Right ventricle myocardium inferior (tissue), 1 donor: ENCODE measurements at regions of chr20 and their contacts with region 1.

Region 1: DNA sequence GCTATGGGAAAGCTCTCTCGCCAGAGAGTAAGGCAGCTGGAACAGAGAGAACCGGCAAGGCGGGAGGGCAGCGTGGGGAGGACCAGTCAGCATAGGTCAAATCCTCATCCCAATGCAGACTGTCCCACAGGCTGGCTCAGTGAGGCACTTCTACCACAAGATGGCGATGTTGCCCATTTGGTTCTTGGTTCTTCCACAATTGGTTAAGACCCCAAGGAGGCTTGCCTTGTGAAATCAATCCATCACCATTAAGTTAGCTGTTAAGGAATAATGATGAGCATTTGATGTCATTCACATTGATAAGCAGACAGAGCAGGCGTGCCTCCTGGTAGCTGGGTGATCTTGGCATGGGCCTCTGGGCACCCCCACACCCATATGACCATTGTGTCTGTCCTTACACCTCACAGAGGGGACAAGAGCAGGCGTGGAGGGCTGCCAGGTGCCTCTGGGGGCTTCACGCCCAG is 2.4 kb downstream of the CSTL1 start:
- DNase-seq: no peak
- ATAC-seq: peak; percentile 70

Region 2: DNA sequence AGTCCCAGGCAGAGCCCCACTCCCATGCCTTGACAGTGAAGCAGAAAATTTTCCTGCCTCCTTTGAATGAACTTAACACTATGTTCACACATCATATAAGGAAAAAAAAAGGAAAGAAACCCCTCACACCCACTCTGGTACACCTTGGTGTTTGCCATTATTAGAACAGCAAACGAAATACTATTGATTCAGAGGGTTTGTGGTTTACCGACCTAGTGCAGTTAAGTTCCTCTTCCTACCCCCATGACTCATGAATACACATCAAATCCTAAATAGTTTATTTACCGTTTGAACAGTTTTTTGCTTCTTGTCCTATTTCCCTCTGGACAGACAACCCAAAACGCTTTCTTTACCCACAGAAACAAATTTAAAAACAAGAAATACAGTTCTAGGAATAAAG is 1095.2 kb before region 1 on chr20:
- intact Hi-C with region 1: loop called (anchors 10 kb)
- DNase-seq: no peak
- ATAC-seq: no peak

Region 3: DNA sequence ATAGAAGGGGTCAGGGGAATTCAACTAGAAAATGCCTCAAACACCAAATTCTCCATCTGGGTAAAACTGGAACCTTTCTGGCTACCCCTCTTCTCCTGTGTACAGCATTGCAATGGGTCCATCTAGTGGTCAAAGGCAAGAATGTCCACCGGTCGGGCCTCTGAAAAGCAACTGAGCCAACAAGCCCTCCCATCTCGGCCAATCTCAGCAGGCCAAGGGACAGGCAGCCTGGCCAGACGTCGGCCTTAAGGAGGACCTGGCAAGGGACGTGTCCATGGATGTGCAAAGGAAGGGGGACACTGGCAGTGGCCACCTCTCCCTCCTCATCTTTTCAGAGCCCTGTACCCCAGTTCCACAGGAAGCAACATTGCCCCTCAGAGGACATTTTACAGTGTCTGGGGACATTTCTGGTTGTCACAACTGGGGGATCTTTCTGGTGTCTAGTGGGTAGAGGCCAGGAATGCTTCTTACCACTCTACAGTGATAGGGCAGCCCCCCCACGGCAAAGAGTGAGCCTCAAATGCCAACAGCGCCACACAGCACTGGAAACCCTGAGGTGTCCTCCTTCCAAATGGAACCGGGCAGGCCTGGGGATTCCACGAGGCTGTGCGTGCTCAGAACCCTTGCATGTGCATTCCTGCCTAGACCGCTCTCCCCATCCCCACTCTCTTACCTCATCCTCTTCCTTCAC is 757.7 kb before region 1 on chr20:
- intact Hi-C with region 1: loop called (anchors 10 kb)
- DNase-seq: no peak
- ATAC-seq: peak; percentile 79

Region 4: DNA sequence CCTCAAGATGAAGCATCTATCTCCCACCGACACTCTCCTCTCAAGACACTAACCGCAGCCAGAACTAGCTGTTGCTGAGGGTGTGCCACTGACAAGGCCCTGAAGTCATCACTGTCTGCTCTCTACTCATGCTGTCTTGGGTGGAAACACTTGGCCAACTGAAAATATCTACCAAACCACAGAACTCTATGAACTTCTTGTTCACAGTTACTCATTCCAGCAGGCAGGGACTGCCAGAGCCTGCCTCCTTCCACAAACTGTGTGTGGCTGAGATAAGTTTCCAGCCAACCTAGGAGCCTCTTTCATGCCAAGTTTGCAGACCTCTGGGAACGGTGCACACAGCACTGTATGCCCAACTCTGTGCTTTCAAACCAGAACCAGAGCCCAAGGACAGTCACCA is 136.8 kb before region 1 on chr20:
- intact Hi-C with region 1: no loop called
- DNase-seq: no peak
- ATAC-seq: peak; percentile 86

Region 5: DNA sequence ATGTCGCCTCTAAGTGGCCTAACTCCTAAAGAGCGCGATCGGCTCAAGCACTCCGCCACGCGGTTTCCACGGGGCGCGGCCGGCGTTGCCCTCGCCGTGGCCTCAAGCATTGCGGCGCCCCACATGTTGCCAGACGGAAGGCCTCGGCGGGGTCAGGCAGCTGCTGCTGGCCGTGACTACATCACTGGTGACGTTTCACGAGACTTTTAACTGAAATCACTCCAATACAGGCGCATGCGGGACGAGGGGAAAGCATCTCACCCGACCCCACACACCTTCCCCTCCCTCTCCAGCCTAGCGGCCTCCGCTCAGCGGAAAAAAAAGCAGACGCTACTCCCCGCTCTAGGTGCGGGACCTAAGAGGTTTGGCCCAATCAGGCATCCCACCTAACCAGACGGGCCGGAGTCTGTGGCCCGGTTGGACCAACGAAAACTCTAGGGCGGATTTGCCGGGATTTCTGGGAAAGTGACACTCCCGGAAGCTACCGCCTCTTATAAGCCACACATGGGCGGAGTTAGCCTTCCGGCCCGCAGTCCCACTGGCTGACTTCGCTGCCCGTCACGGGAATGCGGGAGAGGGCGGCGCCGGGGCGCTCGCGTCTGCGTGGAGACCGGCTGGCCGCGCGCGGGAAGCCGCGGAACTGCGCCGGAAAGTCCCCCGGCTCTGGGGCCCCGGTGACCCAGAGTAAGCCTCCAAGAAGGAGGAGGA is 91.5 kb before region 1 on chr20 and contains the start of gene NXT1:
- intact Hi-C with region 1: loop called (anchors 1 kb)
- DNase-seq: peak; percentile 97
- ATAC-seq: peak; percentile 95
- total RNA-seq, gene NXT1: 6.5 TPM

Region 6: DNA sequence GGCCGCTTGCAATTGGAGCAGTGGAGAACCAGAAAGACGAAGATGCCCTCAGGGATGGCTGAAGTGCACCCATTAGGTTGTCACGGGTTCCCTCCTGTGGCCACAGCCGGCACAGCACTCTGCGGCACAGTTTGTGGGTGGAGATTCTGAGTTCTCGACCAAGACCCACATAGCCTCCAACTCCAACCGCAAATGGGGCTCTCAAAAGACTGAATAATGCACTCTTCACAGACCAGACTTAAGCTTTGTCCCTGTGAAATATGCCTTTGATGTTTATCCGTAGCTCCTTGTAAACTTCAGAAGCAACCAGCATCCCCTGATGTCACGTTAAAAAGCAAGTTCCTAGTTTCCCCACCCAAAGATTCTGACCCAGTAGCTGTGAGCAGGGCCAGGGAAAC is 164.8 kb after region 1 on chr20:
- intact Hi-C with region 1: loop called (anchors 2 kb)
- DNase-seq: peak; percentile 83
- ATAC-seq: peak; percentile 85